Astrocyte of the cerebellum (primary cell): ENCODE measurements at regions of chr2 and their contacts with region 1.

Region 1: GRCh38 chr2:37389989-37390765 is 45.7 kb downstream of the QPCT start:
- DNase-seq: peak; percentile 70
- H3K4me3 ChIP-seq: no peak overlapping the region
- CTCF ChIP-seq: no peak

Region 2: DNA sequence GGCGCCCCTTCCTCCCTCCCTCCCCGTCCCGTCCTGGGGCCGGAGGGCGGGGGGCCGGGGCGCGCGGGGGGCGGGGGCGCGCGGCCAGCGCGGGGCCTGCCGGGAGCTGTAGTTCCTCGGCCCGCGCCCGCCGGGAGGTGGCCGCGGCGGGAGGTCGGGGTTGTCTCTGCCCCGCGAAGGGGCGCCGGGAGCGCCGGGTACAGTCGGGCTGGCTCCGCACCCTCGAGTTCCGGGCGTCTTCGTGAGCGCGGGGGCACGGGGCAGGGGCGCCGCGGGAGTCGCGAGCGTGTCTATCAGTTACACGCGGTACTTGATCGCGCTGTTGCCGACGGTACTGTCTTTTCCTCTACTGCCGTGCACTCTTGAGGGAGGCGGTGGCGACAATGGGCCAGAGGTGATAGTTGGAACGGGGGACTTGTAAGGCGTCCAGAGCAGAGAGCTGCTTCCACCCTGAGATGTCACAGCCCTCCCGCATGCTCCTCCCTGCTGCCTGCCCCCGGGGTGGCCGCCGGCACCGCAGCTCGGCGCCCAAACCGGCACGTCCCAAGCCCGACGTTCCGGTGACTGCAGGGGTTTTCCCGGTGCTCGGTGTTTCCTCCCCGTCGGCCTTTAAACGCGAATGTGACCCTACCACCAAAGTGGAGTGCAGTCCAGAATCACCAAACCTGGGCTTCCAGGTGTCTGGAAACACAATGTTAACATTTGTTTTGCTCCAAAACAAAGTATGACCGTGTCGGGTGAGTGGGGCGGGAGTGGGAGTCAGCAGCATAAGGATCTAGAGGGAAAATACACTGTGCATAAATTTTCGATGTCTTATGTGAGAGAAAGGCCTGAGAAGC is 65.2 kb before region 1 on chr2 and contains the start of gene PRKD3:
- in situ Hi-C with region 1: no loop called
- DNase-seq: no peak
- H3K4me3 ChIP-seq: peak within 1 kb of the TSS; percentile 80
- CTCF ChIP-seq: no peak

Region 3: GRCh38 chr2:37489041-37489456 is 98.9 kb after region 1 on chr2:
- in situ Hi-C with region 1: no loop called
- DNase-seq: no peak
- H3K4me3 ChIP-seq: no peak overlapping the region
- CTCF ChIP-seq: no peak

Region 4: DNA sequence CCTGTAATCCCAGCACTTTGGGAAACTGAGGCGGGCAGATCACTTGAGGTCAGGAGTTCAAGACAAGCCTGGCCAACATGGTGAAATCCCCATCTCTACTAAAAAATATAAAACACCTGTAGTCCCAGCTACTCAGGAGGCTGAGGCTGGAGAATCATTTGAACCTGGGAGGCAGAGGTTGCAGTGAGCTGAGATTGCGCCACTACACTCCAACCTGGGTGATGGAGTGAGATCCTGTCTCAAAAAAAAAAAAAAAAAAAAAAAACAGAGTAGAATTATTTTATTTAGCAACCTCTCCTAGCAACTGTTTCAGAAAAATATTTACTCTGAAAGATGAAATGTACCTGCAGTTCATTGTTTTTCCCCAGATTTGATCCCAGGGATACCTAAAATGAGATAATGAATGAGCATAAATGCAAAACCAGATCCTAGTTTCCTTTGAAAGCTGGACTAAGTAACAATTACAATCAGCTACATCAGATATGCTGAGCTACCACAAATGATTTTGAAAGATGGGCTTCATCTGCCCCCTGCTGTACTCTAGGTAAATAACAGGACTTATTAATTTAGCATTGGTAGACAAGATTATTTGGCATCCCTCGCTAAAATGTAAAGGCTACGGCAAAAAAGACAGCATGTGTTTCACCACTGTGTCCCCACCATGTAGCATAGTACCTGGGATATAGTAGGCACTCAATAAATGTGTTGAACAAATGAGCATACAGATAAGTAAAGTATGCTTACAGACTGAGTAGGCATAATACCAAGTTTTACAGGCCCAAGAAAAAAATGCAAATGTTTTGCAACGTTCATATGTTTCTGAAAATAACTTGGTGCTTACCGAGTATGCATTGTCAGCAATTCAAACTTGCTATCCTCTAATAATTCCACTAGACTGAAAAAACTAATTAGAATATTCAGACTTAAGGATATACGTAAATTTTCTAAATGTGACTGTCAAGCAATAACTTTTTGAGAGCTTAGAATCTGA is 884.4 kb after region 1 on chr2:
- in situ Hi-C with region 1: loop called (anchors 25 kb)
- DNase-seq: peak; percentile 87
- H3K4me3 ChIP-seq: no peak overlapping the region
- CTCF ChIP-seq: peak; percentile 45